Gastrocnemius medialis (tissue), 4 donors: ENCODE measurements at regions of chr10 and their contacts with region 1.

Region 1: GRCh38 chr10:122062831-122063674 is 74.1 kb downstream of the TACC2 start:
- DNase-seq: peak; percentile 93 to 96
- ATAC-seq: peak; percentile 97
- H3K4me3 ChIP-seq: no peak overlapping the region
- H3K27ac ChIP-seq: peak overlapping the region; percentile 84 to 96 (median 91)
- H3K4me1 ChIP-seq: peaks cover 38 to 39% of the 10 kb centered on the region in 2 donors
- H3K27me3 ChIP-seq: no peaks in the 10 kb centered on the region
- CTCF ChIP-seq: peak in 1 of 5 experiments; percentile 30
- POLR2A ChIP-seq: peak; percentile 66 to 88

Region 2: DNA sequence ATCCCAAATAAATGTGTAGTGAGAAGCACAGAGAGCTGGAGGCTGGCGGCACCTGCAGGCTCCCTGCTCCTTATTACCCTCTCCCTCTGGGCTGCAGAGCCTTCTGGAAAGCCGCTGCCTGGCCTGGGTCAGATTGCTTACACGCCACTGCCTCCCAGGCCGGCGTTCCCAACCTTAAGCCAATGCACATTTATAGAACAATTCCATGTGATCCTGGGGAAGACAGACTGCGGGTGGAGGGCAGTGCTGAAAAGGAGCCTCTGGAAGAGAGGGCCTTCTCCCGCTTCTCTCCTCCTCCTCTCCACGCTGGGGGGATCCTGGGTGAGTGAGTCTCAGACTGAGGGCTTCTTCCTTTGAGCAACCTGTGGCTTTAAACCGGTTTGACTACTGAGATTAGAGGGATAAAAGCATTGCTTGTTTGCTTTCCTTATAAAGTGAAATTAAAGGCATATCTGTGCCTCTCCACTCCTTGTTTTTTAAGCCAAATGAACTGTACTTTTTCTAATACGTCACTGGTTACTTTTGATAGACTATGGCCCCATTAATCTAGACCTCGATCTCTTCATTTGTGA is 68.6 kb before region 1 on chr10:
- in situ Hi-C with region 1: no loop called
- intact Hi-C with region 1: loop called (anchors 5 kb)
- DNase-seq: peak; percentile 89 to 96
- ATAC-seq: peak; percentile 40 to 58
- H3K4me3 ChIP-seq: peak overlapping the region; percentile 37 to 63 (median 57)
- H3K27ac ChIP-seq: peak overlapping the region; percentile 94 to 98 (median 96)
- H3K4me1 ChIP-seq: peaks cover 34 to 51% of the 10 kb centered on the region in 2 donors
- H3K27me3 ChIP-seq: no peaks in the 10 kb centered on the region
- CTCF ChIP-seq: peak in 1 of 5 experiments; percentile 15
- POLR2A ChIP-seq: peak; percentile 94 to 98

Region 3: DNA sequence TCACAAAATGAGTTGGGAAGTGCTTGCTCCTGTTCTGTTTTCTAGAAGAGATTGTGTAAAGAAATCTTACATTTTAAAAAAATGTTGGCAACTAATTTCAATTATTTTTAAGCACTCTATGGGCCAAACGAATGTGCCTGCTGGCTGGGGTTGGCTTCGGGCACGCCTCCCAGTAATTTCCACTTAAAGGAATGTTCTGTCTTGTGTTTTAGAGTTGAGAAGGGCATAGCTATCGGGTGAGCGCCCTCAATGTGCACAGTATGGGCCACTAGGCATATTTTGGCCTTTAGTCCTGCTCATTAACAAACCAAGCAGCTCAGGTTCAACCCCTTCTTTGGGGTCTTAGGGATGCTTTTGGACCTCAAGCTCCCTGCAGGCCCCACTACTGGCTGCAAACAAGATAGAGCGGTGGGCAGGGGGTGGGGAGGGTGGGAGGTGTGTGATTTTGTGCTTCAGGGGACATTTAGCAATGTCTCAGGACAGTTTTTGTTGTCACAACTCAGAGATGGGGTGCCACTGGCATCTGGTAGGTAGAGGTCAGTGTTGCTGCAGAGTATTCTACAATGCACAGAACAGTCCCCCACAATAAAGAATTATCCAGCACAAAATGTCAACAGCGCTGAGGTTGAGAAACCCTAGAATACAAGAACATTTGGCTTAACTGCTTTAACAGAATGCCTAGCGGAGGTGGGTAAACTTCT is 33.4 kb before region 1 on chr10:
- in situ Hi-C with region 1: no loop called
- intact Hi-C with region 1: no loop called
- DNase-seq: peak; percentile 48 to 68
- ATAC-seq: peak; percentile 57 to 66
- H3K4me3 ChIP-seq: peak overlapping the region in 2 of 4 donors; percentile 14 to 30
- H3K27ac ChIP-seq: peak overlapping the region; percentile 75 to 90 (median 81)
- H3K4me1 ChIP-seq: peaks cover 42 to 47% of the 10 kb centered on the region in 2 donors
- H3K27me3 ChIP-seq: no peaks in the 10 kb centered on the region
- CTCF ChIP-seq: peak in 2 of 5 experiments; percentile 28 to 32
- POLR2A ChIP-seq: no peak

Region 4: GRCh38 chr10:122098924-122099323 is 35.9 kb after region 1 on chr10:
- in situ Hi-C with region 1: loop called in 1 of 4 experiments (anchors 10 kb)
- intact Hi-C with region 1: loop called (anchors 1 kb)
- DNase-seq: peak; percentile 86 to 89
- ATAC-seq: peak; percentile 83 to 90
- H3K4me3 ChIP-seq: no peak overlapping the region
- H3K27ac ChIP-seq: peak overlapping the region; percentile 77 to 95 (median 89)
- H3K4me1 ChIP-seq: peaks cover 43 to 52% of the 10 kb centered on the region in 2 donors
- H3K27me3 ChIP-seq: no peaks in the 10 kb centered on the region
- CTCF ChIP-seq: no peak
- POLR2A ChIP-seq: no peak

Region 5: GRCh38 chr10:122152544-122152943 is 89.5 kb after region 1 on chr10:
- in situ Hi-C with region 1: no loop called
- intact Hi-C with region 1: loop called (anchors 2 kb)
- DNase-seq: peak; percentile 97 to 99
- ATAC-seq: peak; percentile 87 to 90
- H3K4me3 ChIP-seq: no peak overlapping the region
- H3K27ac ChIP-seq: peak overlapping the region; percentile 84 to 98 (median 96)
- H3K4me1 ChIP-seq: peaks cover 66 to 81% of the 10 kb centered on the region in 2 donors
- H3K27me3 ChIP-seq: no peaks in the 10 kb centered on the region
- CTCF ChIP-seq: peak in 1 of 5 experiments; percentile 24
- POLR2A ChIP-seq: peak; percentile 9 to 62